ENCODE measurements at regions of chr17 and their contacts with region 1.

Region 1: GRCh38 chr17:29617125-29617480 is 5.6 kb downstream of the CORO6 start:
- DNase-seq: no peak
- H3K4me3 ChIP-seq: peak overlapping the region; percentile 12; the same call in 1 of the 2 replicates
- CTCF ChIP-seq: peak; percentile 87

Region 2: DNA sequence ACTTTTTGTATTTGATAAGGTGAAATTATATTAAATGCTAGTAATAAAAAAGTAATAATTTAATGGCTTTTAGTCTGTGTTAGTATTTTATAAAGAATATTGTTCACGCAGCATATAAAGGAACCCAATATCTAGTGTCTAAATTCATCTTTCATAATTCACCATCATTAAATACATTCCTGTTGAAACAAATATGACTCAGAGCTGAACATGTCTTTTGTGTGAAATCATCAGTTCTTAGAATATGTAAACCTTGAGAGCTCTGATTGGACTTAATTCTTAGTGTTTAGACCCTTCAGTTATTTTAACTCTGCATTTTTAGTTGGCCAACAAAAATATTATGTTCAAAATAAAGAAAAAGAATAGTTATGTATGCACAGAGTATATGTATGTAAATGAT is 122.1 kb before region 1 on chr17:
- CTCF ChIA-PET with region 1: no interaction called
- POLR2A ChIA-PET with region 1: no interaction called
- DNase-seq: peak; percentile 17
- H3K4me3 ChIP-seq: no peak overlapping the region
- CTCF ChIP-seq: no peak

Region 3: DNA sequence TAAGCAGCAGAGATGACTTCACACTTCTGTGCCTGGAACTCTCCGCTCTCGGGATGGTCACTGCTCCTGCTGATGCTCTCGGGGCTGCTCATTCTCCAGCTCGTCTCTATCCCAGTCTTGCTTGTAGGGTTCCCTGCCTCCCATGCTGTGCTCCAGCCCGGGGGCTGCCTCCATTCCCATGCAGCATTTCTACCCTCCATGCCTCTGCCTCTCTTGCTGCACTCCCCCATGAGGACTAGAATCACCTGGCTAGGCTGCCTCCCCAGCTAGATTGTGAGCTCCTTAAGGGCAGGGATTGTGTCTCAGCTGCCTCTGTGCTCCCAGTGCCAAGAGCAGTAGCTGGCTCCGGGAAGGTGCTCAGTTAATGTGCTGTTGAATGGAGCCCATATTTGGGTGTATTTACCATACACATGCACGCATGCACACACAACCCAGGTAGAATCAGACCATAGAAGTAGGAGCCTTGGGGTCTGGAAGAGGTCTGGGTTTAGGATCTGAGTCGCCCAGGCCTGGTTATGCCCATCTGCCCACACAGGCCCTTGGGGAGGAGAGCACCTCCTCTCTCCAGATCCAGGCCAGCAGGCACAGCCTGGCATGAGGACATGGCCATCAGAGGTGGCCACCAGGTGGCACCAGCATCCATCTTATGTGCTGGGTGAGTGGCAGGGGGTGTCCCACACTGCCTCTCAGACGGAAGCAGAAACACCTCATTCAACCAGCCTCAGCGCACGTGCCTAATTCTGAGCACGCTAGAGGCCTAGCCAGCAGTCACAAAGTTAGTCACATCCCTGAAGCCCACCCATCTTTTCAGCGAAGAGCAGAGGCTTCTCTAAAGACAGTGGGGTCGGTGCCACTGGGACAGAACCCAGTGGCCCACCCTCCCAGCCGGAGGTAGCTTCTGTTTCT is 37.0 kb before region 1 on chr17:
- CTCF ChIA-PET with region 1: interaction called, 210 read pairs
- POLR2A ChIA-PET with region 1: no interaction called
- DNase-seq: no peak
- H3K4me3 ChIP-seq: no peak overlapping the region
- CTCF ChIP-seq: peak; percentile 95

Region 4: GRCh38 chr17:29597361-29598172 is 19.5 kb before region 1 on chr17:
- CTCF ChIA-PET with region 1: interaction called, 103 read pairs
- POLR2A ChIA-PET with region 1: no interaction called
- DNase-seq: no peak
- H3K4me3 ChIP-seq: no peak overlapping the region
- CTCF ChIP-seq: no peak

Region 5: DNA sequence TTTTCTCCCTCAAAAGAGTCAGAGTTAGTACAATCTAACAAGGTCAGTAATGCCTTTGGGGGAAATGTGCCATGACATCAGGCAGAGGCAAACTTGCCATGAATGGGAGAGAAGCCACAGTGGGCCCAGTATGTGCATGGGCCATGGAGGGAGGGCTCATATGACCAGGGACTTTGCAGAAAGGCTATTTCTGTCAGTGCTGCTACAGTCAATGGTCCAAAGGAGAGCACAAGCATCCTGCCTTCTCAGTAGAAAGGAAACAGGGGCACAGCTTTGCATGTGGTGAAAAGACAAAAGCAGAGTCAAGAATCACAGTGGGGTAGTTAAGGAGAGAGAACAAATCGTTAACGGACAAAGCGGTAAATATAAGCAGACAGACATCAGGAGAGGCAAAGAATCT is 16.8 kb after region 1 on chr17:
- CTCF ChIA-PET with region 1: interaction called, 76 read pairs
- POLR2A ChIA-PET with region 1: no interaction called
- DNase-seq: no peak
- H3K4me3 ChIP-seq: no peak overlapping the region
- CTCF ChIP-seq: no peak

Region 6: DNA sequence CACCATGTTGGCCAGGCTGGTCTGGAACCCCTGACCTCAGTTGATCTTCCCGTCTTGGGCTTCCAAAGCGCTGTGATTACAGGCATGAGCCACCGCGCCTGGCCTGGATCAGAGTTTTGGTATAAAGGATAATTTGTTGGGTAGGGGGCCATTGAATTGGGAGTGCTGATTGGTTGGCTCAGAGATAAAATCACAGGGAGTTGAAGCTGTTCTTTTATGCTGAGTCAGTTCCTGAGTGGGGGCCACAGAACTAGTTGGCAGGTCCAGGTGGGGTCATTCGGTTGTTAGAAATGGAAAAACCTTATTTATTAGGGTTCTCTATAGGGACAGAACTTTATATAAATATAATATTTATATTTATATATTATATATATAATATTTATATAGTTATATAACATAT is 165.8 kb after region 1 on chr17:
- CTCF ChIA-PET with region 1: interaction called, 107 read pairs
- POLR2A ChIA-PET with region 1: no interaction called
- DNase-seq: no peak
- H3K4me3 ChIP-seq: no peak overlapping the region
- CTCF ChIP-seq: no peak